ENCODE measurements at regions of chr4 and their contacts with region 1.

Region 1: GRCh38 chr4:83362492-83363329 is 28.1 kb upstream of the HPSE start:
- DNase-seq: peak; percentile 96
- ATAC-seq: peak; percentile 89
- H3K4me3 ChIP-seq: peak overlapping the region; percentile 27 to 53 (median 33); a peak in 5 of 6 replicates
- H3K27ac ChIP-seq: peak overlapping the region; percentile 85
- H3K4me1 ChIP-seq: peaks cover 54% of the 10 kb centered on the region
- H3K27me3 ChIP-seq: no peaks in the 10 kb centered on the region
- CTCF ChIP-seq: peak; percentile 69
- EP300 ChIP-seq: peak in 1 of 2 experiments; percentile 73; a peak in 2 of 4 replicates
- POLR2A ChIP-seq: peak in 1 of 2 experiments; percentile 75; a peak in 2 of 4 replicates
- RAD21 ChIP-seq: peak; percentile 15; the same call in 1 of the 2 replicates

Region 2: DNA sequence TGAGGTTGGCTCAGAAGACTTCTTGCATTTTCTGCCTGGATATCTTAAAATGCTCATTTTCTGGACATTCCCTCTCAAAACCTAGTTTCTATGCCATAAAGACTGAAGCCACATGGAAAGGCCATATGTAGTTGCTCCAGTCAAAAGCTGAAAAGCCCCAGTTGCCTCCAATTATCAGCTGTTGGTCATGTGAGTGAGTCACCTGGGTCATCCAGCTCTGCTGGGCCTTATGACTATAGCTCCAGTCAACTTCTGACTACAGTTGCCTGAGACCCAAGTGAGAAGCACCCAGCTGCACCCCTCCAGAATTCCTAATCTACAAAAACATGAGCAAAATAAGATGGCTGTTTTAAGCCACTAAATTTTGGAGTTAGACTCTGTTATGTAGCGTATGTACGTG is 51.0 kb after region 1 on chr4:
- CTCF ChIA-PET with region 1: no interaction called
- POLR2A ChIA-PET with region 1: no interaction called
- in situ Hi-C with region 1: no loop called
- intact Hi-C with region 1: loop called (anchors 10 kb)
- DNase-seq: no peak
- ATAC-seq: no peak
- H3K4me3 ChIP-seq: no peak overlapping the region
- H3K27ac ChIP-seq: no peak overlapping the region
- H3K4me1 ChIP-seq: no peaks in the 10 kb centered on the region
- H3K27me3 ChIP-seq: no peaks in the 10 kb centered on the region
- CTCF ChIP-seq: no peak
- EP300 ChIP-seq: no peak
- POLR2A ChIP-seq: no peak
- RAD21 ChIP-seq: no peak

Region 3: DNA sequence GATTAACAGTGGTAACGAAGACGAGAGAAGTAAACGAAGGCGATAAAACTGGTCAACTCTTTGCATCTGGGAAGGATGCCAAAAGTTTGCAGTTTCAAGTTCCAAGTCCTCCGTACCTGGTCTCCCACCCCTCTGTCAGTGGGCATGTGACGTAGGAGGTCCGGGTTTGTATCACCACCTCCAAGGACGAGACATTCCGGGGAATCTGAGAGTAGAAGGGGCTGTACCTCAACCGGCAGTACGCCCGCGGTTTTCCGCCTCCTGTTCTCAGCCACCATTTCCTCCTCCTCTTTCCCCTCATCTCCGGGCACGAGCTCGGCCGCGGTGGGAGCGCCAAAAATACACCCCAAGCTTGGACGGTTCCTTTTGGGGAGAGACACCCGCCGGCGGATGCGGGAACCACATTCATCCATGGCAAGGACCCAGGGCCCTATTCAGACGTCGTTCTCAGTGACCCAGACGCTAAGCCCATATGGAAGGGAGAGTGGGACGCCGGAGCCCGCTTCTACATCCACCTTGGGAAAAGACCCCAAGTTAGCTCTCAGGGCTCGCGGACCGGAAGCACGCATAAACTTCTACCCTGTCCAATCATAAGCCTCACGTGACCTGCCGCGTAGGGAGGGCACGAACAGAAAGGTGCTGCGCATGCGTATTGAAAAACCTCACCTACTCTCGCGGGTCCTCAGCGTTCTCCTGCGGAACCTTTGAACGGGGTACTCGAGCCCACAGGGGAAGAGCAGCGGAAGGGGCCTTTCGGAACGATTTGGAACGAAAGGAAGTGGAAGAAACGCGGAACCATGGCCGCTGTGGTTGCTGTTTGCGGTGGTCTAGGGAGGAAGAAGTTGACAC is 92.8 kb after region 1 on chr4 and contains the starts of genes HELQ and MRPS18C:
- CTCF ChIA-PET with region 1: no interaction called
- POLR2A ChIA-PET with region 1: interaction called, 29 read pairs
- in situ Hi-C with region 1: no loop called
- intact Hi-C with region 1: loop called (anchors 2 kb)
- DNase-seq: peak; percentile 99
- ATAC-seq: peak; percentile 95
- H3K4me3 ChIP-seq: peak within 1 kb of the TSS; percentile 78 to 98 (median 90)
- H3K27ac ChIP-seq: peak within 1 kb of the TSS; percentile 93
- H3K4me1 ChIP-seq: peaks cover 29% of the 10 kb centered on the region
- H3K27me3 ChIP-seq: no peaks in the 10 kb centered on the region; a peak in 1 of 5 replicates
- CTCF ChIP-seq: peak; percentile 29
- EP300 ChIP-seq: peak in 1 of 2 experiments; percentile 72; a peak in 3 of 4 replicates
- POLR2A ChIP-seq: peak; percentile 91 to 97
- RAD21 ChIP-seq: no peak; the same call in 1 of the 2 replicates
- total RNA-seq, gene HELQ: 10.2 and 10.8 TPM in 2 replicates
- total RNA-seq, gene MRPS18C: 124 and 141 TPM in 2 replicates

Region 4: DNA sequence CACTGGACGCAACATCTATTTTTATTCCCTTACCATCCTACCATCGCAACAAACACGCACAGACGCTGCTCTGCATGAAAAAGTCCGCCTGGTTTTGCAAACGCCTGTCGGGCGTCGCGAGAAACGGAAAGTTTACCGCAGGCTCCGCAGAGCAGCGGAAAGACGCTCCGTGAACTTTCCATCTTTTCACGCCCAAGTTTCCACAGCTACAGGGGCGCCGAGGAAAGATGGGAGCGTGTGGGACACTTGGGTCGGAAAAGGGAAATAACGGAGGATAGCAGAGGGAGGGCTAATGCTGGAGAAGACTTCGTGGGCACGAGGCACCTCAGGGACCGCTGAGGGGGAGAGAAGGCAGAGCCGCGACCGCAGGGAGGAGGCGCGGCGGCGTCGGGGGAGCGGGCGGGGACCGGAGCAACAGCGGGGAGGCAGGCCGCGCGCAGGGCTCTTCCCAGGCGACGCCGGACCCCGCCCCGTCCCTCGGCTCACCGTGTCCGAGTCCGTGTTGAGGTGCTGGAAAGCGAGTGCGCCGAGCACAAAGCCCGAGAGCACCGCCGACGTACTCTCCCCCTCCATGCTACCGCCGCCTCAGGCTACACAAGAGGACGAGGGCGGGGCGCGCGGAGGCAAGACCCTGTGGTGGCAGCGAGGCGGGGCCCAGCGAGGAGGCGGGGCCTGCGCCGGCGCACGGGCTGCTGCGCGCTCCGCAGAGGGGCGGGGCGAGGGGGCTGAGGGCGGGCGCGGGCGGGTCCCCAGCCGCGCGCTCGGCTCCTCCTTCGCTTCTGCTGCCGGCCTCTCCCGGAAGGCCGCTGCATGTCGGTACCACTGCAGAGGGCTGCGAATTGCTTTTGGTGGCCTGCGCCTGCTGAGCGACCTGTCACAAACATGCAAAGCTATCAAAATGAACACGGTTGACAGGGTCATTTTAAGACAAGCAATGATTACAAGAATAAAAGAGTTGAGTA is 122.1 kb after region 1 on chr4 and contains the start of gene ABRAXAS1:
- CTCF ChIA-PET with region 1: no interaction called
- POLR2A ChIA-PET with region 1: no interaction called
- in situ Hi-C with region 1: no loop called
- intact Hi-C with region 1: loop called (anchors 1 kb)
- DNase-seq: peak; percentile 91
- ATAC-seq: peak; percentile 93
- H3K4me3 ChIP-seq: peak within 1 kb of the TSS; percentile 62 to 78 (median 72)
- H3K27ac ChIP-seq: peak within 1 kb of the TSS; percentile 74
- H3K4me1 ChIP-seq: peaks cover 37% of the 10 kb centered on the region
- H3K27me3 ChIP-seq: no peaks in the 10 kb centered on the region
- CTCF ChIP-seq: no peak
- EP300 ChIP-seq: no peak
- POLR2A ChIP-seq: peak; percentile 84 to 94
- RAD21 ChIP-seq: 0 out of 2 replicates have a peak, but pooled peaks have one; percentile 22
- total RNA-seq, gene ABRAXAS1: 14.1 and 20.8 TPM in 2 replicates